Activated B cell treated with CpG ODN at 0.5 μM for 24 hours (primary cell): ENCODE measurements at regions of chr16 and their contacts with region 1.

Region 1: DNA sequence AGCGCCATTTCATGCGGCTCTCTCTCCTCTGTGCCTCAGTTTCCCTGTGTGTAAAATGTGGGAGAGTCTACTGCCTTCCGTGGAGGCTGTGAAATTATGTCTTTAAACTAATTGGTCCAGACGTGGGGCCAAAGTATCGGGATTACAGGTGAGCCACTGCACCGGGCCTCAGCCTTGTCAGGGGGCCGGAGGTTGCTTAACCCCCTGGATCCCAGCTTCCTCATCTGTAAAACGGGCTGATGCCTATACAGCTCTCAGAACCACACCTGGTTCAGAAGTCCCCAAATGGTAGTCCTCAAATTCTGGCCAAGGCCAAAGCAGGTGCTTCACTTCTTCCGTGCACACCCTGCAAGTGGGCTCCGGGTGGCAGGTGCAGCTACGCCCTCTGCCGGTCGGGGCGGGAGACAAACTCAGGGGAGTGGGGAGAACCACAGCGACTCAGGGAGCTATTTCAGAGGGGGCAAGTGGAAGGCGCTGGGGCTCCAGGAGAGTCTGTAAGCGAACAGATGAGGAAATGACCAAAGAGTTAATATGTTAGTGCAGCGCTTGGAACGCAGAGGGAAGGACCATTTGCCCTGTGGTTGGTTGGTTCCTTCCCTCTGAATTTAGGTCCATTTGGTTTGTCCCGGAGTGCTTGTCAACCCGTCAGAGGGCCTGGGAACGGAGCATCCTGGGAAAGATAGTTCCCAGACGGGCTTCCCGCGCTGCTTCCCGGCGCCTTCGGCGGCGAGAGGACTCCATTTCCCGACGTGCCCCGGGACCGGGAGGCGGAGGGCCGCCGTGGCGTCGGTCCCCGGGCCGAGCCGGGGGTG is at the start of gene MGRN1:
- DNase-seq: peak; percentile 86
- ATAC-seq: peak; percentile 90
- H3K4me3 Mint-ChIP-seq: peak within 1 kb of the TSS; percentile 99
- H3K27ac Mint-ChIP-seq: peak within 1 kb of the TSS; percentile 100
- H3K4me1 Mint-ChIP-seq: peaks cover 31% of the 10 kb centered on the region
- H3K27me3 Mint-ChIP-seq: no peaks in the 10 kb centered on the region
- CTCF ChIP-seq: peak; percentile 91
- total RNA-seq, gene MGRN1: 69.6 and 88.6 TPM in 2 replicates

Region 2: GRCh38 chr16:4597174-4597573 is 27.0 kb before region 1 on chr16:
- CTCF ChIA-PET with region 1: no interaction called
- POLR2A ChIA-PET with region 1: no interaction called
- intact Hi-C with region 1: no loop called
- DNase-seq: no peak
- ATAC-seq: no peak
- H3K4me3 Mint-ChIP-seq: no peak overlapping the region
- H3K27ac Mint-ChIP-seq: no peak overlapping the region
- H3K4me1 Mint-ChIP-seq: no peaks in the 10 kb centered on the region
- H3K27me3 Mint-ChIP-seq: peaks cover 9% of the 10 kb centered on the region
- CTCF ChIP-seq: no peak

Region 3: GRCh38 chr16:4649744-4650442 is 25.7 kb after region 1 on chr16:
- CTCF ChIA-PET with region 1: interaction called, 6 read pairs
- POLR2A ChIA-PET with region 1: no interaction called
- intact Hi-C with region 1: loop called (anchors 2 kb)
- DNase-seq: no peak
- ATAC-seq: no peak
- H3K4me3 Mint-ChIP-seq: no peak overlapping the region
- H3K27ac Mint-ChIP-seq: no peak overlapping the region
- H3K4me1 Mint-ChIP-seq: peaks cover 27% of the 10 kb centered on the region
- H3K27me3 Mint-ChIP-seq: no peaks in the 10 kb centered on the region
- CTCF ChIP-seq: no peak